Adrenal gland (tissue), 19 donors: ENCODE measurements at regions of chr6 and their contacts with region 1.

Region 1: GRCh38 chr6:35731736-35732532 is 4.9 kb upstream of the ARMC12 start:
- DNase-seq: peak; percentile 96 to 98 (median 97)
- H3K4me3 ChIP-seq: peak overlapping the region; percentile 30 to 86 (median 53)
- H3K27ac ChIP-seq: peak overlapping the region; percentile 97 to 100 (median 98)
- H3K4me1 ChIP-seq: peaks cover 49 to 72% of the 10 kb centered on the region in 2 donors
- H3K27me3 ChIP-seq: no peaks in the 10 kb centered on the region
- CTCF ChIP-seq: peak in 2 of 6 experiments; percentile 9 to 14
- POLR2A ChIP-seq: peak in 1 of 2 donors; percentile 78

Region 2: DNA sequence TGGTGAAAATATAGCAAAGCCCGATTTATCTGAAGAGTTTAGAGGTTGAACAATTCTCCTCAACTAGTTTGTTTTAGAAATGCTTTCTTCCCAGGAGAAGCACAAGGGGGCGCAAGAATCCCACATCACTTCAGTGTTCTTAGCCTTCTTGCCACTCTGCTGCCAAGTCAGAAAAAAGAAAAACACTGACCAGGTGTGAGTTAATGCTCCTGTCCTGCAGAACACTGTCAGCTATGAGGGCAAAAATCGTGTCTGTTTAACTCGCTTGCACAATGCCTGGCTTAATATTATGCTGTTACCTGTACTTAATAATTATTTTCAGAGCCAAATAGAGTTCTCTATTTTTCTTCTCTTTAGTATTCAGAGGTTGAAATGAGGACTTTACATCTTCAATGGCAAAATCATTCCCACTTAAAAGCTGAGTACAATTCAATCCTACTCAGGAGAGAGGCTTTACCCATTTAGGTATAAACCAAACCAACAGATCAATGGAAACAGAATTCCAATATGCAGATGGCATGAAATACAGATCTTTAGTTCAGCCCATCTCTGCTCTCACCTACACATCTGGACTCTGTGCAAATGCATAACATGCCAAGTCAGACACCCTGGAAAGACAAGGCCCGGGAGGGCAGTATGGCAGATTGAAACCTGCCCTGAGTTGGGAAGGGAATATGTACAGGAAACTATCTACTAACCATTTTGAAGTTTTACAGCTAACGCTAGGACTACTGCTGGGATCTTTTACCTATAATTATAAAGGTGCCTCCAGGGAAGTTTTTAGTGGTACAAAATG is 147.8 kb before region 1 on chr6:
- intact Hi-C with region 1: loop called (anchors 5 kb)
- DNase-seq: peak; percentile 61 to 89 (median 74)
- H3K4me3 ChIP-seq: no peak overlapping the region
- H3K27ac ChIP-seq: peak overlapping the region in 2 of 5 donors; percentile 3 to 45
- H3K4me1 ChIP-seq: peaks cover 7 to 60% of the 10 kb centered on the region in 2 donors
- H3K27me3 ChIP-seq: no peaks in the 10 kb centered on the region
- CTCF ChIP-seq: peak; percentile 61 to 88 (median 85)
- POLR2A ChIP-seq: no peak

Region 3: GRCh38 chr6:35596448-35597442 is 135.2 kb before region 1 on chr6:
- intact Hi-C with region 1: loop called in 1 of 2 experiments (anchors 5 kb)
- DNase-seq: no peak
- H3K4me3 ChIP-seq: no peak overlapping the region
- H3K27ac ChIP-seq: peak overlapping the region; percentile 20 to 90 (median 54)
- H3K4me1 ChIP-seq: peaks cover 56 to 99% of the 10 kb centered on the region in 2 donors
- H3K27me3 ChIP-seq: no peaks in the 10 kb centered on the region
- CTCF ChIP-seq: no peak
- POLR2A ChIP-seq: no peak

Region 4: GRCh38 chr6:35634316-35634715 is 97.6 kb before region 1 on chr6:
- intact Hi-C with region 1: loop called in 1 of 2 experiments (anchors 10 kb)
- DNase-seq: no peak
- H3K4me3 ChIP-seq: no peak overlapping the region
- H3K27ac ChIP-seq: peak overlapping the region in 1 of 5 donors; percentile 22
- H3K4me1 ChIP-seq: peaks cover 0 to 25% of the 10 kb centered on the region in 2 donors
- H3K27me3 ChIP-seq: no peaks in the 10 kb centered on the region
- CTCF ChIP-seq: no peak
- POLR2A ChIP-seq: no peak

Region 5: DNA sequence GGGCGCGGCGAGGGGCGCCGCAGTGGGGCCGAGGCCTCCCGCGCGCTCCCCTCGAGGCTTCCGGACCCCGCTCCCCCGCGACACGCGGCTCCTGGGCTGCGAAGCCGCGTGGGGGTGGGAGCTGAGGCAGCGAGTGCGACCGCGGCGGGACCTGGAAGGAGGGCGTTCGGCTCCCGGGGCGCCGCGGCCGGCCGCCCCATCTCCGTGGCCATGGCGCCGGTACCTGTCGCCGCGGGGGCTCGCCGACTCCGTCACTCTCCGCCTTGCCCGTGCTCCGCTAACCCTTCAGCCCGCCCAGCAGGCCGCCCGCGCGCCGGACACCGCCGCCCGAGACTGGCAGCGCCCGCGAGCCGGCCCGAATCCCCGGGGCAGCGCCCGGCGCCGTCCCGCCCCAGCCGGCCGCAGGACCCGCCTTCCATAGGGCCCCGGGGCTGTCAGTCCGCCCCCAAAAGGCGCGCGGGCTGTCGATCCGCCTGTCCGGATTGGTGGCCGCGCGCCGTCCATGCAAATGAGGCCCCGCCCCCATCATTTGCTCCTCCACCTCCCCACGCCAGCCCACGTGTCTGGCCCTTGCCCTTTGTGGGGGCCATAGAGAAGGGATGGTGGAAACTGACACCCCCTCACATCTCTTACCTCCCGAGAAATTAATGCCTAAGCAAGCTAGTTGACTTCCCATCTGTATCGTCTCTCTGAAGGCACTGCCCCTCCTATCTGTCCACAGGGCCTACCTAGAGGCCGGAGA is 43.2 kb before region 1 on chr6 and contains the start of gene FKBP5:
- intact Hi-C with region 1: loop called (anchors 2 to 5 kb)
- DNase-seq: peak; percentile 92 to 98 (median 96)
- H3K4me3 ChIP-seq: peak within 1 kb of the TSS; percentile 62 to 86 (median 75)
- H3K27ac ChIP-seq: peak within 1 kb of the TSS; percentile 71 to 97 (median 90)
- H3K4me1 ChIP-seq: peaks cover 16 to 43% of the 10 kb centered on the region in 2 donors
- H3K27me3 ChIP-seq: no peaks in the 10 kb centered on the region
- CTCF ChIP-seq: peak in 1 of 6 experiments; percentile 9
- POLR2A ChIP-seq: peak; percentile 95 to 97
- total RNA-seq, gene FKBP5: 19.7 to 234 (median 120) TPM

Region 6: DNA sequence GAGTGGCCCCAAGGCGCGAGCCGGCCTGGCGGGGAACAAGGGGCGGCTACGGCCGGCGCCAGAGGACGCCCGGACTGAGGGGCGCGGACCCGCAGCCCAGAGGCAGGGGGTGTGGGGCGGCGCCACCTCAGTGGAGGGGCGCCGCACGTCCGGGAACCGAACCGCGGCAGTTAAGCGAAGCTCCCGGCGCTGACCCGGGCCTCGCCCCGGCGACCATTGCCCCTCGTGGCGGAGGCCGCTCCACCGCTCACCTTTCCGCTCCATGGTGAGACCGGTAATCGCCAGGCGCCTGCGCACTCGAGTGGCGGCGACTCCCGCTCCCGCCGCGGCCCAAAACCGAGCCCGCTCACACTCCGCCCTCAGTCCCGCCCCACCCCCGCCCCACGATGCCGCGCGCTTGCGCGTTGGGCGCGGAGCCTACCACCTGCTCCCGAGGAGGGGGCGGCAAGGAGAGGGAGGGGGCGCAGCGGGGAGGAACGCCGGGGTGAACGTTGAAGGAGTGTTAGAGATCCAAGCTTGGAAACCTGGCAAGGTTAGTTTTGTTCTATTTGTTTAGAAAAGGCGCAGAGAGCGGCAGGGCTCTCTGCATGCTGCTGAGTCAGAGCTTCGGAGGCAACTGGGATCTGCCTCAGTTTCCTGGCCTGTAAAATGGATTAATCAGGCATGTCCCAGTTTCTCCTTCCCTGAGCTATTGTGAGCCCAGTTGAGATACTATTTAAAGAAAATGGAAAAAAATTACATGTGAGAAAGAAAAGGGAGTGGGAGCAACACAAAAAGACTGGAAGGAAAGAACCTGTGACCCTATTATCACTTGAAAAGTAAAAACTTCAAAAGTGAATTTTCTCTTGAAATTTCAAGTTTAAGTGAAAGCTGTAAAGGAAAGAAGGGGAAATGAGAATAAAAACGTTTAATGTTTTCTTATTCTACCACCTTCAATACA is 189.1 kb after region 1 on chr6 and contains the start of gene SRPK1:
- intact Hi-C with region 1: no loop called
- DNase-seq: peak; percentile 83 to 91 (median 87)
- H3K4me3 ChIP-seq: peak within 1 kb of the TSS in 3 of 4 donors; percentile 40 to 86 (median 58)
- H3K27ac ChIP-seq: peak within 1 kb of the TSS in 2 of 5 donors; percentile 31 to 56
- H3K4me1 ChIP-seq: peaks cover 0 to 30% of the 10 kb centered on the region in 2 donors
- H3K27me3 ChIP-seq: no peaks in the 10 kb centered on the region
- CTCF ChIP-seq: no peak
- POLR2A ChIP-seq: peak in 1 of 2 donors; percentile 47
- total RNA-seq, gene SRPK1: 11.5 to 37.7 (median 18.0) TPM